ENCODE measurements at regions of chr6 and their contacts with region 1.

Region 1: GRCh38 chr6:37257634-37258404 is at the starts of genes TBC1D22B and TMEM217:
- H3K4me3 ChIP-seq: peak within 1 kb of the TSS; percentile 66
- H3K27ac ChIP-seq: peak within 1 kb of the TSS; percentile 85
- H3K4me1 ChIP-seq: peaks cover 4% of the 10 kb centered on the region; the same call in 1 of the 2 replicates
- CTCF ChIP-seq: peak; percentile 53; the same call in 1 of the 2 replicates

Region 2: DNA sequence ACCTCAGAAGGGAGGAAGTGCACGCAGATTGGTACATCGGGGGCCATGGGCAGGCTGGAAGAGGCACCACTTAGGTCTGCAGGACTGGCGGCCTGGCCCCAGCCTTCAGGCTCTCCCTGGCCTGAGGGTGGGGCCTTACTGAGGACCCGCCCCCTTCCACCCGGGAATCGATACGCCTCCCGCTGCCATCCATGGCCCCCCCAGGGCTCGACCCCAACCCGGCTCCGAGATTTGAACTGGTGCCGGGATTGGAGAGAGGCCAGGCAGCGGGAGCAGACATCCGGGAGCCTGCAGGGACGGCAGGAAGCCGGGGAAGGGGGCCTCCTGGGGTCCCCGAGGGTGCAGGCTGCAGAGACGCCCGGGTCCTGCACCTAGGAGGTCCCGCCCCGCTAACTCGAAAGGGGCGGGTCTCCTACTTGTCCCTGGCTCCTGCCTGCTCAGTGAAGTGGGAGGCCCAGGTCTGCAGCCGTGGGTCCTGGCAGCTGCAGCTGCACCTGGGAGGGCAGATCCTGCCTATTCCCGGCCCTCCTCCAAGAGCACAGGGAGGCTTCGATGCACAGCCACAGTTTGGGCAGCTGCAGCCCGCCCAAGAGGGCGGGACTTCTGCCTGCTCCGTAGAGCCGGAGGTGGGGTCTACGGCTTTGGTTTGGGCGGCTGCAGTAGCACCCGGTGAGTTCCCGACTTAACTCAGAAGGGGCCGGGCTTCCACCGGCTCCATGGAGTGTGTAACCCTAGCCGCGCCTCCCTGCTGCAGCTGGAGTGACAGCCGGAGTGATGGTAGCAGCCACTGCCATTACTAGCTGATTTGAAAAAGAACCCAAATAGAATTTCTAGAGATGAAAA is 35.5 kb before region 1 on chr6:
- CTCF ChIA-PET with region 1: interaction called, 7 read pairs
- POLR2A ChIA-PET with region 1: interaction called, 27 read pairs
- H3K4me3 ChIP-seq: peak overlapping the region; percentile 64
- H3K27ac ChIP-seq: peak overlapping the region; percentile 68; the same call in 1 of the 2 replicates
- H3K4me1 ChIP-seq: peaks cover 6% of the 10 kb centered on the region
- CTCF ChIP-seq: no peak; the same call in 1 of the 2 replicates

Region 3: GRCh38 chr6:37239950-37240713 is 17.7 kb before region 1 on chr6:
- CTCF ChIA-PET with region 1: interaction called, 3 read pairs
- POLR2A ChIA-PET with region 1: interaction called, 20 read pairs
- H3K4me3 ChIP-seq: no peak overlapping the region
- H3K27ac ChIP-seq: peak overlapping the region; percentile 1; the same call in 1 of the 2 replicates
- H3K4me1 ChIP-seq: peaks cover 6% of the 10 kb centered on the region
- CTCF ChIP-seq: no peak